ENCODE measurements at regions of chr20 and their contacts with region 1.

Region 1: GRCh38 chr20:58650776-58651558 is at the start of gene STX16:
- DNase-seq: peak; percentile 91
- ATAC-seq: peak; percentile 74
- H3K4me3 ChIP-seq: peak within 1 kb of the TSS; percentile 87 to 99 (median 94)
- H3K4me3 Mint-ChIP-seq: peak within 1 kb of the TSS; percentile 100
- H3K27ac ChIP-seq: peak within 1 kb of the TSS; percentile 84 to 95
- H3K27ac Mint-ChIP-seq: peak within 1 kb of the TSS; percentile 97
- H3K4me1 ChIP-seq: peaks cover 14 to 20% of the 10 kb centered on the region in 2 donors
- H3K4me1 Mint-ChIP-seq: peaks cover 23% of the 10 kb centered on the region
- H3K27me3 ChIP-seq: peaks cover 0 to 3% (median 0%) of the 10 kb centered on the region in 4 experiments
- H3K27me3 Mint-ChIP-seq: no peaks in the 10 kb centered on the region
- CTCF ChIP-seq: peak; percentile 75
- total RNA-seq, gene STX16: 106 and 117 TPM in 2 replicates

Region 2: GRCh38 chr20:57622579-57623377 is 1028.2 kb before region 1 on chr20:
- CTCF ChIA-PET with region 1: no interaction called
- POLR2A ChIA-PET with region 1: interaction called, 7 read pairs
- intact Hi-C with region 1: loop called (anchors 2 kb)
- DNase-seq: peak; percentile 69
- ATAC-seq: no peak
- H3K4me3 ChIP-seq: no peak overlapping the region
- H3K4me3 Mint-ChIP-seq: peak overlapping the region; percentile 13
- H3K27ac ChIP-seq: no peak overlapping the region
- H3K27ac Mint-ChIP-seq: peak overlapping the region; percentile 80
- H3K4me1 ChIP-seq: peaks cover 54 to 59% of the 10 kb centered on the region in 2 donors
- H3K4me1 Mint-ChIP-seq: peaks cover 65% of the 10 kb centered on the region
- H3K27me3 ChIP-seq: no peaks in the 10 kb centered on the region
- H3K27me3 Mint-ChIP-seq: no peaks in the 10 kb centered on the region
- CTCF ChIP-seq: peak; percentile 82

Region 3: DNA sequence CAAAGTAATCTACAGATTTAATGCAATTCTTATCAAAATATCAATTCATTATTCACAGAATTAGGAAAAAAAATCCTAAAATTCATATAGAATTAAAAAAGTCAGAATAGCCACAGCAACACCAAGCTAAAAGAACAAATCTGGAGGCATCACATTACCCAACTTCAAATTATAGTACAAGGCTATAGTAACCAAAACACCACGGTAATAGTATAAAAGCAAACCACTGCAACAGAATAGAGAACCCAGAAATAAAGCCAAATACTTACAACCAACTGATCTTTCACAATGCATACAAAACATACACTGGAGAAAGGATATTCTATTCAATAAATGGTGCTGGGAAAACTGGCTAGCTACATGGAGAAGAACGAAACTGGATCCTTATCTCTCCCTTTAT is 398.1 kb before region 1 on chr20:
- CTCF ChIA-PET with region 1: no interaction called
- POLR2A ChIA-PET with region 1: no interaction called
- intact Hi-C with region 1: no loop called
- DNase-seq: no peak
- ATAC-seq: no peak
- H3K4me3 ChIP-seq: no peak overlapping the region
- H3K4me3 Mint-ChIP-seq: no peak overlapping the region
- H3K27ac ChIP-seq: no peak overlapping the region
- H3K27ac Mint-ChIP-seq: no peak overlapping the region
- H3K4me1 ChIP-seq: no peaks in the 10 kb centered on the region
- H3K4me1 Mint-ChIP-seq: peaks cover 5% of the 10 kb centered on the region
- H3K27me3 ChIP-seq: no peaks in the 10 kb centered on the region
- H3K27me3 Mint-ChIP-seq: no peaks in the 10 kb centered on the region
- CTCF ChIP-seq: no peak

Region 4: GRCh38 chr20:58388882-58389323 is 262.1 kb before region 1 on chr20 and contains the start of gene VAPB:
- CTCF ChIA-PET with region 1: interaction called, 6 read pairs
- POLR2A ChIA-PET with region 1: interaction called, 11 read pairs
- intact Hi-C with region 1: loop called (anchors 1 kb)
- DNase-seq: peak; percentile 97
- ATAC-seq: peak; percentile 96
- H3K4me3 ChIP-seq: peak within 1 kb of the TSS; percentile 60 to 86 (median 75)
- H3K4me3 Mint-ChIP-seq: peak within 1 kb of the TSS; percentile 95
- H3K27ac ChIP-seq: peak within 1 kb of the TSS; percentile 97 to 99
- H3K27ac Mint-ChIP-seq: peak within 1 kb of the TSS; percentile 94
- H3K4me1 ChIP-seq: peaks cover 18 to 21% of the 10 kb centered on the region in 2 donors
- H3K4me1 Mint-ChIP-seq: peaks cover 37% of the 10 kb centered on the region
- H3K27me3 ChIP-seq: peaks cover 0 to 3% (median 0%) of the 10 kb centered on the region in 4 experiments
- H3K27me3 Mint-ChIP-seq: peaks cover 3% of the 10 kb centered on the region
- CTCF ChIP-seq: no peak
- total RNA-seq, gene VAPB: 26.4 and 29.5 TPM in 2 replicates

Region 5: DNA sequence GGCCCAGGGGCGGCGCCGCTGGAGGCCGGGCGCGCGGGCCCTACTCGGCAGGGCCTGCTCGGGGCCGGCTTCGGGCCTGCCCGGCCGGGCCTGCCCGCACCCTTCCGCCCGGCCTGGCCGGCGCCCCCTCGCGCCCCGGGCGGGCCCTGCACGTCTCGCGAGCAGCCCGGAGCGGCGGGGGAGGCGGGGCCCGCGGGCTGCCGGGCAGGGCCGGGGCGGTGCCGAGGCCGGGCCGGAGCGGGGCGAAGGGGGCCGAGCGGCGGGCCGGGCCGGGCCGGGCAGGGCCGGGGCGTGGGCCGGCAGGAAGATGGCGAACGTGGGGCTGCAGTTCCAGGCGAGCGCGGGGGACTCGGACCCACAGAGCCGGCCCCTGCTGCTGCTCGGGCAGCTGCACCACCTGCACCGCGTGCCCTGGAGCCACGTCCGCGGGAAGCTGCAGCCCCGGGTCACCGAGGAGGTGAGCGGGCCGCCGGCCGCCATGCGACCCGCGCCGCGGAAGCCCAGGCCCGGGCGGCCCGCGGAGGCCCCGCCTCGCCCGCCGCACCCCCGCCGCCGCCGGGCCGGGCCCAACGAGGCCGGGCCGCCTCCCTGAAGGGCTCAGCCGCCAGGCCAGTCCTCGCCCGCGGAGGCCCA is 41.7 kb after region 1 on chr20 and contains the start of gene NPEPL1:
- CTCF ChIA-PET with region 1: interaction called, 12 read pairs
- POLR2A ChIA-PET with region 1: no interaction called
- intact Hi-C with region 1: loop called (anchors 1 kb)
- DNase-seq: peak; percentile 76
- ATAC-seq: peak; percentile 97
- H3K4me3 ChIP-seq: peak within 1 kb of the TSS in 4 of 5 experiments; percentile 22 to 57 (median 50)
- H3K4me3 Mint-ChIP-seq: peak within 1 kb of the TSS; percentile 86
- H3K27ac ChIP-seq: peak within 1 kb of the TSS; percentile 18 to 59
- H3K27ac Mint-ChIP-seq: peak within 1 kb of the TSS; percentile 80
- H3K4me1 ChIP-seq: peaks cover 8% of the 10 kb centered on the region in 2 donors
- H3K4me1 Mint-ChIP-seq: peaks cover 14% of the 10 kb centered on the region
- H3K27me3 ChIP-seq: no peaks in the 10 kb centered on the region
- H3K27me3 Mint-ChIP-seq: no peaks in the 10 kb centered on the region
- CTCF ChIP-seq: no peak
- total RNA-seq, gene NPEPL1: 34.3 and 37.2 TPM in 2 replicates

Region 6: GRCh38 chr20:58997141-58997770 is 346.3 kb after region 1 on chr20:
- CTCF ChIA-PET with region 1: no interaction called
- POLR2A ChIA-PET with region 1: interaction called, 12 read pairs
- intact Hi-C with region 1: no loop called
- DNase-seq: no peak
- ATAC-seq: no peak
- H3K4me3 ChIP-seq: no peak overlapping the region
- H3K4me3 Mint-ChIP-seq: no peak overlapping the region
- H3K27ac ChIP-seq: no peak overlapping the region
- H3K27ac Mint-ChIP-seq: peak overlapping the region; percentile 68
- H3K4me1 ChIP-seq: peaks cover 22 to 38% of the 10 kb centered on the region in 2 donors
- H3K4me1 Mint-ChIP-seq: peaks cover 56% of the 10 kb centered on the region
- H3K27me3 ChIP-seq: no peaks in the 10 kb centered on the region
- H3K27me3 Mint-ChIP-seq: no peaks in the 10 kb centered on the region
- CTCF ChIP-seq: no peak